ENCODE measurements at regions of chr13 and their contacts with region 1.

Region 1: GRCh38 chr13:80145171-80145690 is 195.7 kb downstream of the SPRY2 start:
- DNase-seq: no peak
- ATAC-seq: no peak
- H3K4me3 ChIP-seq: no peak overlapping the region
- H3K27ac ChIP-seq: no peak overlapping the region
- H3K4me1 ChIP-seq: no peaks in the 10 kb centered on the region
- H3K27me3 ChIP-seq: no peaks in the 10 kb centered on the region
- CTCF ChIP-seq: no peak

Region 2: DNA sequence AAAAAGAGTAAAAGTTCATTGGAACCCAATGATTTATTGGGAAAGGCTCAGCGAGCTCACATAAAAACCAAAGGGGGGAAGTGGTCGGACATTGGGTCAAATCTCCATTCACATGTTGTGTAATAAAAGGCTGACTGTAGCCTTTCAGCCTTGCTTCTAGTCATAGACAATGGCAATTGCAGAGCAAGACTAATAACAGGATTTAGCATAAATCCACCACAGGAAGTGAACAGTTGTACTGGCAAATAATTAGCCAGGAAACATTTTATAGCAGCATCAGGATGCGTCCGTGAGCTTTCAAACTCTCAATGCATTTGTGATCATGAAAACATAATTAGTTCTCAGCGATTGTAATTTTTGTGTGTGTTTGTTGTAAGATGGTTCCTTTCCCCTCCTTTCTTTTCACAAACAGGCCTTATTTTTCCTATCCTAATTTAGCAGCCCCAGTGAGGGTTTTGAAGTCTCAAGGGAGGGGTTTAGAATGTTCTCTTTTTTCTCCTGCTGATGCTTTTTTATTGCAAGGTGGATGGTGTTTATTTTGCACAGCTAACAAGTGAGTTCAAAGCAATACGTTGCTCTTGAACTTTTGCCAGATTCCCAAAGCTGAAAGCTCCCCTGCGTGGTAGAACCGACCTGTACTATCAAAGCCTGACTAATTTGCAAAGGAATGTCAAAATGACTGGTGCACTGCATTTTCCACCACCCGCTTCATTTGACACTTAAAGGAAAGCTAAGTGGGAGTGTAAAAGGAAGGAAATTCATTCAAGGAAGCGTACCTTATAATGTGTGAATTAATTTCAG is 90.1 kb after region 1 on chr13:
- CTCF ChIA-PET with region 1: interaction called, 12 read pairs
- POLR2A ChIA-PET with region 1: no interaction called
- intact Hi-C with region 1: no loop called
- DNase-seq: peak; percentile 85
- ATAC-seq: peak; percentile 85
- H3K4me3 ChIP-seq: peak overlapping the region; percentile 42
- H3K27ac ChIP-seq: peak overlapping the region; percentile 68
- H3K4me1 ChIP-seq: peaks cover 32% of the 10 kb centered on the region
- H3K27me3 ChIP-seq: no peaks in the 10 kb centered on the region
- CTCF ChIP-seq: no peak